Panc1 (cell line): ENCODE measurements at regions of chr12 and their contacts with region 1.

Region 1: GRCh38 chr12:25583545-25583944 is 30.5 kb upstream of the LMNTD1 start:
- DNase-seq: no peak
- ATAC-seq: no peak
- H3K4me3 ChIP-seq: no peak overlapping the region
- H3K27ac ChIP-seq: no peak overlapping the region
- H3K4me1 ChIP-seq: no peaks in the 10 kb centered on the region
- H3K27me3 ChIP-seq: peaks cover 2% of the 10 kb centered on the region; the same call in 1 of the 2 replicates
- CTCF ChIP-seq: no peak

Region 2: GRCh38 chr12:25276199-25276937 is 307.2 kb before region 1 on chr12:
- CTCF ChIA-PET with region 1: no interaction called
- POLR2A ChIA-PET with region 1: no interaction called
- in situ Hi-C with region 1: no loop called
- intact Hi-C with region 1: no loop called
- DNase-seq: peak; percentile 92
- ATAC-seq: peak; percentile 69
- H3K4me3 ChIP-seq: no peak overlapping the region
- H3K27ac ChIP-seq: no peak overlapping the region
- H3K4me1 ChIP-seq: no peaks in the 10 kb centered on the region
- H3K27me3 ChIP-seq: peaks cover 5% of the 10 kb centered on the region; the same call in 1 of the 2 replicates
- CTCF ChIP-seq: peak; percentile 9; the same call in 1 of the 2 replicates

Region 3: DNA sequence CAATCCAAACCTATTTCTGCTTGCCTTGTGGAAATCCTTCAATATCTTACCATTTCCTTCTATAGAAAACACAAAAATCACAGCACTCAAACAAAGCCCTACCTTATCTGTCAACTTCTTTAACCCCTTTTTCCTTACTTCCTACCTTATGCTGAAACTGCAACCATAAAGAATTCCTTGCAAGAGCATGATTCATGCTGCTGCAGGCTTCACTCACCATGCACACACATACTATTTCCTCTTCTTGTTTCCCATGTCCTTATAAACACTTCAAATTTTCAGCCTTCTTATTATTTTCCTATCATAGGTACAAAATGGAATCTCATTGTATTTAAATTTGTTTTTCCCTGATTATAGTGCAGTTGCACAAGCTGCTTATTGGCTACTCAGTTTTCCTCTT is 53.8 kb before region 1 on chr12:
- CTCF ChIA-PET with region 1: no interaction called
- POLR2A ChIA-PET with region 1: interaction called, 10 read pairs
- in situ Hi-C with region 1: no loop called
- intact Hi-C with region 1: no loop called
- DNase-seq: no peak
- ATAC-seq: no peak
- H3K4me3 ChIP-seq: no peak overlapping the region
- H3K27ac ChIP-seq: no peak overlapping the region
- H3K4me1 ChIP-seq: no peaks in the 10 kb centered on the region
- H3K27me3 ChIP-seq: no peaks in the 10 kb centered on the region
- CTCF ChIP-seq: no peak

Region 4: DNA sequence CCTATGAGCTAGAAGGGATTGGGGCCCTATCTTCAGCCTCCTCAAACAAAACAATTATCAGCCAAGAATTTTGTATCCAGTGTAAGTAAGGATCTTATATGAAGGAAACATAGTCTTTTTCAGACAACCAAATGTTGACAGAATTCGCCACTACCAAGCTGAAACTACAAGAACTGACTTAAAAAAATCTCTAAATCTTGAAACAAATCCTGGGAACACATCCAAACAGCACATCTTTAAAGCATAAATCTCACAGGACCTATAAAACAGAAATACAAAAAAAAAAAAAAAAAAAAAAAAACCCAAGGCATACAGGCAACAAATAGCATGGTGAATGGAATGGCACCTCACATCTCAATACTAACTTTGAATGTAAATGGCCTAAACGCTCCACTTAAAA is 10.8 kb after region 1 on chr12:
- CTCF ChIA-PET with region 1: no interaction called
- POLR2A ChIA-PET with region 1: no interaction called
- in situ Hi-C with region 1: no loop called
- intact Hi-C with region 1: no loop called
- DNase-seq: no peak
- ATAC-seq: no peak
- H3K4me3 ChIP-seq: no peak overlapping the region
- H3K27ac ChIP-seq: no peak overlapping the region
- H3K4me1 ChIP-seq: no peaks in the 10 kb centered on the region
- H3K27me3 ChIP-seq: no peaks in the 10 kb centered on the region
- CTCF ChIP-seq: no peak

Region 5: GRCh38 chr12:25625146-25625545 is 41.6 kb after region 1 on chr12:
- CTCF ChIA-PET with region 1: no interaction called
- POLR2A ChIA-PET with region 1: no interaction called
- in situ Hi-C with region 1: no loop called
- intact Hi-C with region 1: no loop called
- DNase-seq: no peak
- ATAC-seq: no peak
- H3K4me3 ChIP-seq: no peak overlapping the region
- H3K27ac ChIP-seq: no peak overlapping the region
- H3K4me1 ChIP-seq: no peaks in the 10 kb centered on the region
- H3K27me3 ChIP-seq: no peaks in the 10 kb centered on the region
- CTCF ChIP-seq: no peak

Region 6: DNA sequence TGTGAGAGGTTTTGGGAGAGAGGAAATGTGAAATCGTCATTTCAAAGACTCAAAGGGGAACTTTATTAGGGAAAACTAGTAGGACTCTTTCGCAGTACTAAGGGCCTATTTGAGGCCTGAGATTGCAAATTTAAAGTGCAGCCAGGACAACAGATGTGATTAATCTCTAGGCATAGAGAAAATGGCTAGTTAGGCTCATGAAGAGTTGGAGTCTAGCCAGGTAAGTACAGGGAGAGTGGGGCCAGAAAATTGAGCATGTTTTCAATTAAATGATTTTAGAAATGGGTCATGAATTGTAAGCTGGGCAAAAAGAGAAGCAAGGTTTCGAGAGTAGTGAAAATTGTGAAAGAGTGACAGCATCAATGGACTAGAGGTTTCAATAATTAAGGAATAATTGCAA is 61.4 kb after region 1 on chr12:
- CTCF ChIA-PET with region 1: no interaction called
- POLR2A ChIA-PET with region 1: no interaction called
- in situ Hi-C with region 1: no loop called
- intact Hi-C with region 1: no loop called
- DNase-seq: no peak
- ATAC-seq: no peak
- H3K4me3 ChIP-seq: no peak overlapping the region
- H3K27ac ChIP-seq: no peak overlapping the region
- H3K4me1 ChIP-seq: peaks cover 7% of the 10 kb centered on the region; the same call in 1 of the 2 replicates
- H3K27me3 ChIP-seq: no peaks in the 10 kb centered on the region; the same call in 1 of the 2 replicates
- CTCF ChIP-seq: no peak

Region 7: DNA sequence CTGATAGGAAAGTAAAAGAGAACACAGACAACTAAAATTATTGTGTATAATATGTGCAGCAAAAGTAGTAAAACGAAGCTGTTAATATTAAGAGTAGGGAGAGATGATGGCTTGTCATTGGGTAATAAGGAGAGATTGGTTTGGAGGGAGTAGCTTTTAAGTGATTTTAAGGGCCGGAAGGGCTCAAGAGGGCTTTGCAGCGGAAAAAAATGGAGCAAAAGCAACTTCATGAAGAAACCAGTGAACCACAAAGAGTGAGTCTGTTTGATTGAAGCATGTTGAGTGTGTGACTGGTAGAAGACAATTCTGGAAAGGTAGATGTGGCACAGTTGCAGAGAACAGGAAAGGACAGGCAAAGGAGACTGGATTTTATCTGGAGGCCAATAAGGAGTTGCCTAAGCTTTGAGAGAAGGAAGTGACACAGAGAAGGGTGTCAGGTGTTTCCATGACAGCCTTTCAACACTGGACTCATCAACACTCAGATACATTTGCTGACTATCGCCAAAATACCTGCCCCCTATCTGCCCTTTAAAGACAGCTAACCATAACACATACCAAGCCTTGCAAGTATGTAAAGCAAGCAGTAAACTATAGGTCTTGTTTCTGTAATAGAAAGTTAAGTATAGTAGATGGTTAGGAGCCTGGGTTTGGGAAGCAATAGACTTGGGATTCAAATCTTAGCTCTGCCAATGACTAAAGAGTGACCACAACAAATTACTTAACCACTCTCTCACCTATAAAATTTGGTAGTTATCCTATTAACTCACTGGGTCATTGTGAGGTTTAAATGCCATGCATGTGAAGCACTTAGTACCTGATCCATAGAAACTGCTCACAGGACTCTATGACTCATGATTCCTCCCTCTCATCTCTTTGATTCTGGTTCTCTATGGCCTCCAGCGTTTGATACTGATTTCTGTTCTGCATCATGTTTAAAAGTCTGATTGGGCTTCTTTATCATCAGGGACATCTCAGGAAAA is 86.8 kb after region 1 on chr12:
- CTCF ChIA-PET with region 1: interaction called, 10 read pairs
- POLR2A ChIA-PET with region 1: no interaction called
- in situ Hi-C with region 1: no loop called
- intact Hi-C with region 1: no loop called
- DNase-seq: no peak
- ATAC-seq: no peak
- H3K4me3 ChIP-seq: no peak overlapping the region
- H3K27ac ChIP-seq: no peak overlapping the region
- H3K4me1 ChIP-seq: no peaks in the 10 kb centered on the region
- H3K27me3 ChIP-seq: peaks cover 17% of the 10 kb centered on the region
- CTCF ChIP-seq: no peak